Activated CD8-positive, alpha-beta T cell treated with anti-CD3 and anti-CD28 coated beads, Interleukin-2, amount 10 ng/mL, durations not matched to agents 7 days and 5 days (primary cell): ENCODE measurements at regions of chr13 and their contacts with region 1.

Region 1: DNA sequence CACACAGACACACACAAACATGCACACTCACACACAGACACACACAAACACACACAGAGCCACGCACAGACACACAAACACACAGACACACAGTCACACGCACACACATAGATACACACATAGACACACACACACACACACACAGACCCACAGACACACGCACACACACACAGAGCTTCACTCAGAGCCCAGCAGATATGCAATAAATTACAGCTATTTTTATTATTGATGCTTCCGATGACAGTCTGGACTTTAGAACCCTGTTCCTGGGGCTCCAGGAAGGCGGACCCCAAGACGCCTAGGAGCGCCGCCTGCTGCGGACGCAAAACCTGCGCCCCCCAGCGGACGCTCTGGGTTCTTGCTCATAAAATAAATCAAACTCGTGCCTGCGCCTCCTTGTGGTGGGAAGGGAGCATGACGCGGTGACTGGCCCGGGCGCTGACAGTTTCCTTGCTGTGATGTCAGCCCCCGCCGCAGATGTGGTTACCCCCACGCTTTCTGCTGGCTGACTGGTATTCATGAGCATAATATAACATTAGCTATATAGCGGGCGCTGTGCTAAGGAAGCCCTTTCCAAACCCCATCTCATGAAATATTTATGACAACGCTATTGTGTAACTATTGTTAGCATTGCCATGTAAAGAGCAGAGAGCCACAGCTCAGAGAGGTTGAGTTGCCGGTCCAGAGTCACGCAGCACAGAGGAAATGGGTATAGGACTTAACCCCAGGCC is 64.4 kb upstream of the TM9SF2 start:
- DNase-seq: peak; percentile 98
- ATAC-seq: peak; percentile 70
- H3K4me3 Mint-ChIP-seq: peak overlapping the region; percentile 25
- H3K27ac Mint-ChIP-seq: peak overlapping the region; percentile 58
- H3K4me1 Mint-ChIP-seq: peaks cover 61% of the 10 kb centered on the region
- H3K27me3 Mint-ChIP-seq: peaks cover 22% of the 10 kb centered on the region

Region 2: DNA sequence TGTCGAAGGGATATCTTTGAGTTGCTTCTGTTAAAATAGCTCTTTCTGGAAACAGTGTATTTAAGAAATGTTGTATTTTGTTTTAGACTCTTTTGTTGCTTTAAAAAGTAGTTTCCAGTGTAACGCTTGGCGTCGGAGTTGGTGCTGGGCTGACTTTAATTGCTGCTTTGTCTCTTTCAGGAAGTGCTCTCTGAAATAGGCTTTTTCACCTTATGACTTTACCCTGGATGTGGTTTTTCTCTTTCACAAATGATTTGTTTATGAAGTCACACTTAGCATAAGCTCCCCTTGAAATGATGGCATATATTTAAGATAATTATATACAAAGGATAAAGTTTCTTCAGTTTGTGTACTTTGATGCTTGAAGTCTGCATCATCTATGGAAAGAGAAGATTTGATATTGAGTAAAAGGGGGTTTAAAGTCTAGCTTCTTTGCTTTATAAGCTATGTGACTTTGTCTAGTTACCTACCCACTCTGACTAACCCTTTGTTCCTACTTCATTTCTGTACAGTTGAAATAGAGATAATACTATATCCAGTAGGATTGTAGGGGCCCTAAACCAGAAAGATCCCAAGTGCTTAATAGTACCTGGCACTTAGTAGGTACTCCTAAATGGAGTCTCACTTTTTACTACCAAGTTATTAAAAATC is 178.5 kb before region 1 on chr13 and contains the start of gene GPR18:
- CTCF ChIA-PET with region 1: interaction called, 346 read pairs
- POLR2A ChIA-PET with region 1: no interaction called
- DNase-seq: peak; percentile 65
- ATAC-seq: peak; percentile 76
- H3K4me3 Mint-ChIP-seq: peak within 1 kb of the TSS; percentile 83
- H3K27ac Mint-ChIP-seq: peak within 1 kb of the TSS; percentile 94
- H3K4me1 Mint-ChIP-seq: peaks cover 65% of the 10 kb centered on the region
- H3K27me3 Mint-ChIP-seq: no peaks in the 10 kb centered on the region
- total RNA-seq, gene GPR18: 16.2 to 16.6 TPM

Region 3: DNA sequence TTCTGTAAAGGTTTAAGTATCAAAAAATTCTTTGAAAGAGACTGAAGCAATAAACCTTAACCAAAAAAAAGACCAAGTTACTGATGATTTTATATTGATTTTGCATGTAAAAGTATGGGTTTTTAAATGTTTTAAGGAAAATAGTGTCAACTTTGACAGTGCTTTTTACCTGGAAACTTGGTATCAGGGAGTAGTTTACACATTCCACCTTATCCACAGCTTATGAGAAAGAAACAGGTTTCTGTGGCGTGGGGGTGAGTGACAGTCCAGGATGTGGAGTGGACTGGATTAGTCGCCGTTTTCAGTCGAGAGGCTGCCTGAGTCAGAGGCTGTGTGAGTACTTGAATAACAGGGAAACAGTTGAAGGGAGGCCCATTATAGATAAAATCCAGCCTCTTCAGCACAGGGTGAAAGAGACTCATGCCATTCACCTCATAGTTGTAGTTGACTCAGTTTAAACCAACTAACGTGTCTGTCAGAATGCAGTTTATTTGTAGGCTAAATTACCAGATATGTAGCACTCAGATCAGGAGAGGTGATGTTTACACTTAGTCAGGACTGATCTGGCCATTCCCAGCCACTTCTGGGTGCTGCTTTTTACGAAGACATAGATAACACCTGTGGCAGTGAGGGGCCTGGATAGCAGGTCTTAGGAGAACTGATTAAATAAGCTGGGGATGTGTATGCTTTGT is 129.1 kb before region 1 on chr13:
- CTCF ChIA-PET with region 1: interaction called, 24 read pairs
- POLR2A ChIA-PET with region 1: no interaction called
- DNase-seq: peak; percentile 64
- ATAC-seq: peak; percentile 67
- H3K4me3 Mint-ChIP-seq: peak overlapping the region; percentile 73
- H3K27ac Mint-ChIP-seq: peak overlapping the region; percentile 89
- H3K4me1 Mint-ChIP-seq: peaks cover 76% of the 10 kb centered on the region
- H3K27me3 Mint-ChIP-seq: no peaks in the 10 kb centered on the region

Region 4: GRCh38 chr13:99366075-99366987 is 70.5 kb before region 1 on chr13:
- CTCF ChIA-PET with region 1: interaction called, 31 read pairs
- POLR2A ChIA-PET with region 1: no interaction called
- DNase-seq: peak; percentile 19
- ATAC-seq: no peak
- H3K4me3 Mint-ChIP-seq: no peak overlapping the region
- H3K27ac Mint-ChIP-seq: peak overlapping the region; percentile 10
- H3K4me1 Mint-ChIP-seq: peaks cover 69% of the 10 kb centered on the region
- H3K27me3 Mint-ChIP-seq: no peaks in the 10 kb centered on the region

Region 5: DNA sequence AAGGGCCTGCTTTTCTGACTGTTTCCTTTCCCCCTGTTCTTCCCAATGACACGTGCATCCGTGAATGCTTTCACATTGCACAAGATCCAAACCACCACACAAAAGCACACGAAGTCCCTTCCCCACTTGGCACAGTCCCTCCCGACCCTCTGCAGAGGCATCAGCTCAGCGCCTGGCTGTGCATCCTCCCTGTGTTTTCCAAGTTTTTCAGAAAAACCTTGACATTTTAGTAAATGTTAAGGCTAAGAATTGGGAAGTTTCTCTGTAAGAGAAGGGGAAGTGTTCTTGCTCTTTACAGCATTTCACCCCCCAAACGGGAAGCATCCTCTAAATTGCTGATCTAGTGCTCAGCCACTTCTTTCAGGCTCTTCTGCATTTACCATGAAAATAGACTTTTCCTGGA is 30.1 kb before region 1 on chr13:
- CTCF ChIA-PET with region 1: interaction called, 22 read pairs
- POLR2A ChIA-PET with region 1: no interaction called
- DNase-seq: no peak
- ATAC-seq: no peak
- H3K4me3 Mint-ChIP-seq: no peak overlapping the region
- H3K27ac Mint-ChIP-seq: no peak overlapping the region
- H3K4me1 Mint-ChIP-seq: peaks cover 22% of the 10 kb centered on the region
- H3K27me3 Mint-ChIP-seq: no peaks in the 10 kb centered on the region

Region 6: DNA sequence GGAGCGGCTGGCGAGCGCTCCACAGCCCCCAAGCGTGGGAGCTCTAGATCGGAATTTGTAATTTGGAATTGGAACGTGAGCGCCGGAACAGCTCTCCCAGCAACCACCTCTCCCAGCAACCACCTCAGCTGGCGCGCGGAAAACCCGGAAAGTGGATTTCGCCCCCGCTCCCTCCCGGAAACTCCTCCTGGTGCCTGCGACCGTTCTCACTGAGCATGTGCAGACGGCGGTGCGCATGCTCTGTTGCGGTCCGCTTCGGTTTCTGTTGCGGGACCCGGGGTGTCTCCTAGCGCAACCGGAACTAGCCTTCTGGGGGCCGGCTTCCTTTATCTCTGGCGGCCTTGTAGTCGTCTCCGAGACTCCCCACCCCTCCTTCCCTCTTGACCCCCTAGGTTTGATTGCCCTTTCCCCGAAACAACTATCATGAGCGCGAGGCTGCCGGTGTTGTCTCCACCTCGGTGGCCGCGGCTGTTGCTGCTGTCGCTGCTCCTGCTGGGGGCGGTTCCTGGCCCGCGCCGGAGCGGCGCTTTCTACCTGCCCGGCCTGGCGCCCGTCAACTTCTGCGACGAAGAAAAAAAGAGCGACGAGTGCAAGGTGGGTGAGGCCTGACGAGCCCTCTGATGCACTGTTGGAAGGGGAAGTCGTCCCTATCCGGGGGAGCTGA is 64.5 kb after region 1 on chr13 and contains the start of gene TM9SF2:
- CTCF ChIA-PET with region 1: interaction called, 74 read pairs
- POLR2A ChIA-PET with region 1: interaction called, 4 read pairs
- DNase-seq: peak; percentile 98
- ATAC-seq: peak; percentile 70
- H3K4me3 Mint-ChIP-seq: peak within 1 kb of the TSS; percentile 88
- H3K27ac Mint-ChIP-seq: peak within 1 kb of the TSS; percentile 97
- H3K4me1 Mint-ChIP-seq: peaks cover 76% of the 10 kb centered on the region
- H3K27me3 Mint-ChIP-seq: no peaks in the 10 kb centered on the region
- total RNA-seq, gene TM9SF2: 64.4 to 64.5 TPM